ENCODE measurements at regions of chr10 and their contacts with region 1.

Region 1: GRCh38 chr10:32795598-32796183 is 162.3 kb downstream of the ITGB1 start:
- DNase-seq: no peak
- H3K4me3 ChIP-seq: no peak overlapping the region
- H3K27ac ChIP-seq: no peak overlapping the region
- H3K4me1 ChIP-seq: no peaks in the 10 kb centered on the region
- H3K27me3 ChIP-seq: no peaks in the 10 kb centered on the region
- CTCF ChIP-seq: peak; percentile 75

Region 2: GRCh38 chr10:33010132-33011037 is 214.7 kb after region 1 on chr10:
- intact Hi-C with region 1: loop called (anchors 2 kb)
- DNase-seq: no peak
- H3K4me3 ChIP-seq: no peak overlapping the region
- H3K27ac ChIP-seq: no peak overlapping the region
- H3K4me1 ChIP-seq: peaks cover 0 to 12% (median 2%) of the 10 kb centered on the region in 4 donors
- H3K27me3 ChIP-seq: no peaks in the 10 kb centered on the region
- CTCF ChIP-seq: peak in 1 of 2 experiments; percentile 22

Measured in tibial artery (tissue), 4 donors.